ENCODE measurements at regions of chr1 and their contacts with region 1.

Region 1: GRCh38 chr1:115624859-115625258 is 16.9 kb upstream of the VANGL1 start:
- DNase-seq: no peak
- H3K4me3 ChIP-seq: no peak overlapping the region
- H3K4me1 ChIP-seq: no peaks in the 10 kb centered on the region
- H3K27me3 ChIP-seq: no peaks in the 10 kb centered on the region

Region 2: GRCh38 chr1:114407898-114408555 is 1216.8 kb before region 1 on chr1:
- in situ Hi-C with region 1: no loop called
- DNase-seq: no peak
- H3K4me3 ChIP-seq: no peak overlapping the region
- H3K4me1 ChIP-seq: no peaks in the 10 kb centered on the region
- H3K27me3 ChIP-seq: no peaks in the 10 kb centered on the region

Region 3: GRCh38 chr1:115706587-115707425 is 81.9 kb after region 1 on chr1:
- in situ Hi-C with region 1: loop called (anchors 25 kb)
- DNase-seq: peak; percentile 36 to 48
- H3K4me3 ChIP-seq: no peak overlapping the region
- H3K4me1 ChIP-seq: peaks cover 18% of the 10 kb centered on the region
- H3K27me3 ChIP-seq: no peaks in the 10 kb centered on the region

Region 4: GRCh38 chr1:116164604-116165368 is 539.9 kb after region 1 on chr1:
- in situ Hi-C with region 1: no loop called
- DNase-seq: no peak
- H3K4me3 ChIP-seq: no peak overlapping the region
- H3K4me1 ChIP-seq: peaks cover 7% of the 10 kb centered on the region
- H3K27me3 ChIP-seq: no peaks in the 10 kb centered on the region

Measured in HAP-1 (cell line).